ENCODE measurements at regions of chr1 and their contacts with region 1.

Region 1: GRCh38 chr1:31789259-31790065 is 25.3 kb upstream of the ADGRB2 start:
- DNase-seq: peak; percentile 87 to 92 (median 90)
- H3K4me3 ChIP-seq: peak overlapping the region in 1 of 2 donors; percentile 78
- H3K4me3 Mint-ChIP-seq: peak overlapping the region; percentile 89 to 96 (median 94)
- H3K27ac ChIP-seq: peak overlapping the region; percentile 71
- H3K27ac Mint-ChIP-seq: peak overlapping the region in 6 of 7 donors; percentile 59 to 99 (median 92)
- H3K4me1 ChIP-seq: peaks cover 9% of the 10 kb centered on the region
- H3K4me1 Mint-ChIP-seq: peaks cover 5 to 19% (median 10%) of the 10 kb centered on the region in 4 donors
- H3K27me3 ChIP-seq: no peaks in the 10 kb centered on the region
- H3K27me3 Mint-ChIP-seq: no peaks in the 10 kb centered on the region

Region 2: DNA sequence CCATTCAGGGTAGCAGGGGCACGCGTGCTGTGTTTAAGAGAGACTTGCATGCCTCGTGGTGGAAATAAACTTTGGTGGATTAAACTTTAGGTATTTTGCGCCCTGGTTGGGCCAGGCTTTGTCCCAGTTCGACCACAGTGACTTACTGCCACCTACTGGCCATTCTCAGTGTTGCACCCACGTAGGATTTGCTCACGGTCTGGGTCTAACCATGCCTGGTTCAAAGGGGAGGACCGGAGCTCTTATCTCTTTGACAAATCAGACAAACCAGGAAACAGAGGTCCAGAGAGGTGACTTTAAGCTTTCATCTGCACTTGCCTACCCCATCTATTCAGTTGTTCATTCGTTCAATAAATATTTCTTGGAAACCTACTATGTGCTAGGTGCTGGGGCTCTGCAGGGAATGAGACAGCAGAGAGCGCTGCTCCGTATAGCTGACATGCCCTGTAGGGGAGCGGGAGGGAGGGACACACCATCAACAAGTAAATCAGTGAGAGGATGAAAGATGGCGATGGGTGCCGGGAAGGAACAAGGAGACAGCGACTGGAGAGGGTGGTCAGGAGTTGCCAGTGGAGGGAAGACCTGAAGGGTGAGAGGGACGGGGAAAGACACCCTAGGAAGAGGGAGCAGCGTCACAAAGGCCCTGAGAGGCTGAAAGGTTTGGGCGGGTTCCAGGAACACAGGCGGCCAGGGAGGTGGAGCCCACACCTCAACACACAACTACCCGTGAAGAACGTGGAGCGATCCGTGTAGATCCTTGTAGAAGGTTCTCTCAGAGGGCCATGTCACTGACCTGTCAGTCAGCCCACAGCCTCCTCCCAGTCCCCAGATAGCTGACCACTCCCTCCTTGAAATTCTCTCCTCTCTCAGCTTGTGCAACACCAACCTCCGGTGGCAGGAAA is 240.3 kb before region 1 on chr1:
- CTCF ChIA-PET with region 1: interaction called, 15 read pairs
- POLR2A ChIA-PET with region 1: no interaction called
- intact Hi-C with region 1: loop called (anchors 5 kb)
- DNase-seq: peak; percentile 79 to 86 (median 84)
- H3K4me3 ChIP-seq: no peak overlapping the region
- H3K4me3 Mint-ChIP-seq: peak overlapping the region; percentile 37 to 75 (median 54)
- H3K27ac ChIP-seq: no peak overlapping the region
- H3K27ac Mint-ChIP-seq: no peak overlapping the region
- H3K4me1 ChIP-seq: peaks cover 11% of the 10 kb centered on the region
- H3K4me1 Mint-ChIP-seq: peaks cover 6 to 9% (median 8%) of the 10 kb centered on the region in 4 donors
- H3K27me3 ChIP-seq: no peaks in the 10 kb centered on the region
- H3K27me3 Mint-ChIP-seq: peaks cover 2 to 4% of the 10 kb centered on the region in 2 donors

Region 3: GRCh38 chr1:31644560-31645273 is 144.7 kb before region 1 on chr1 and contains the start of gene PEF1:
- CTCF ChIA-PET with region 1: interaction called, 13 read pairs
- POLR2A ChIA-PET with region 1: interaction called, 14 read pairs
- intact Hi-C with region 1: loop called (anchors 1 kb)
- DNase-seq: peak; percentile 99 to 100 (median 99)
- H3K4me3 ChIP-seq: peak within 1 kb of the TSS; percentile 72 to 74
- H3K4me3 Mint-ChIP-seq: peak within 1 kb of the TSS; percentile 97 to 100 (median 100)
- H3K27ac ChIP-seq: peak within 1 kb of the TSS; percentile 99
- H3K27ac Mint-ChIP-seq: peak within 1 kb of the TSS; percentile 98 to 100 (median 100)
- H3K4me1 ChIP-seq: peaks cover 41% of the 10 kb centered on the region
- H3K4me1 Mint-ChIP-seq: peaks cover 23 to 43% (median 32%) of the 10 kb centered on the region in 4 donors
- H3K27me3 ChIP-seq: no peaks in the 10 kb centered on the region
- H3K27me3 Mint-ChIP-seq: no peaks in the 10 kb centered on the region
- total RNA-seq, gene PEF1: 39.1 to 41.7 TPM

Region 4: DNA sequence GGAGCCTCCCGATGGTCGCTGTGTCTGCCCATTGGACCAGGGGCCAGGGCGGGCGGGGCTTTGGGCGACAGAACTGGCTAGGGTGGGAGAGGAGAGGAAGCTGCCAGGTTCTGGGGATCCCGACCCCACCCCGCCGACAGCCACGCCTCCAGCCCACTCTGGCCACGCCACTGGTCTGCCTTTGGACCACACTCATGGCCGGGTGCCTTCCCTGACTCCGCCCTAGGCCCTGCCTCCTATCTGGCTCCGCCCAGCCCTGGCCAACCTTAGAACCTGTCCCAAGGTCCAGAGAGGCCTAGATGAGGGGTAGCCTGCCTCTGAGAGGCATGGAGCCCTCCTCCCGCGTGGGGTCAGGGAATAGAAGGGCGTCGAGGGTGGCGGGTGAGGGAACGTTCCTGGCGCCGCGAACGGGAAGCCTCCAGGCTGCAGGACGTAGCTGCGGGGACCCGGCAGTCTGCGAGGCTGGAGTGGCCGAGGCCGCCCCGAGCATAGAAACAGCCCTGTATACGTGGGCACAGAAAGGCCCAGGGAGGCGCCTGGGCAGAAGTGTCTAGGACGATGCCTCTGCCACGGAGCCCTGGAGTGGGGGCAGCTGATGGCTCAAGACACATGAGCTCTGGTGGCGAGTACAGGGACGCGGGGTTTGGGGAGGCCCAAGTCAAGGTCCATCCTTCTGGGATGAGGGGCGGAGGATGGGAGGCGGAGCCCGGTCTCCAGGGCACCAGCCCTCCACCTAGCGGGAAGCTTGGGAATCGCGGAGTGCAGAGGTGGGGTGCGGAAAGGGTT is 74.2 kb before region 1 on chr1:
- CTCF ChIA-PET with region 1: interaction called, 14 read pairs
- POLR2A ChIA-PET with region 1: no interaction called
- intact Hi-C with region 1: loop called (anchors 1 kb)
- DNase-seq: peak in 1 of 5 donors; percentile 15
- H3K4me3 ChIP-seq: no peak overlapping the region
- H3K4me3 Mint-ChIP-seq: peak overlapping the region; percentile 44 to 83 (median 70)
- H3K27ac ChIP-seq: no peak overlapping the region
- H3K27ac Mint-ChIP-seq: no peak overlapping the region
- H3K4me1 ChIP-seq: peaks cover 18% of the 10 kb centered on the region
- H3K4me1 Mint-ChIP-seq: peaks cover 7 to 23% (median 15%) of the 10 kb centered on the region in 4 donors
- H3K27me3 ChIP-seq: no peaks in the 10 kb centered on the region
- H3K27me3 Mint-ChIP-seq: peaks cover 33 to 51% of the 10 kb centered on the region in 2 donors

Region 5: DNA sequence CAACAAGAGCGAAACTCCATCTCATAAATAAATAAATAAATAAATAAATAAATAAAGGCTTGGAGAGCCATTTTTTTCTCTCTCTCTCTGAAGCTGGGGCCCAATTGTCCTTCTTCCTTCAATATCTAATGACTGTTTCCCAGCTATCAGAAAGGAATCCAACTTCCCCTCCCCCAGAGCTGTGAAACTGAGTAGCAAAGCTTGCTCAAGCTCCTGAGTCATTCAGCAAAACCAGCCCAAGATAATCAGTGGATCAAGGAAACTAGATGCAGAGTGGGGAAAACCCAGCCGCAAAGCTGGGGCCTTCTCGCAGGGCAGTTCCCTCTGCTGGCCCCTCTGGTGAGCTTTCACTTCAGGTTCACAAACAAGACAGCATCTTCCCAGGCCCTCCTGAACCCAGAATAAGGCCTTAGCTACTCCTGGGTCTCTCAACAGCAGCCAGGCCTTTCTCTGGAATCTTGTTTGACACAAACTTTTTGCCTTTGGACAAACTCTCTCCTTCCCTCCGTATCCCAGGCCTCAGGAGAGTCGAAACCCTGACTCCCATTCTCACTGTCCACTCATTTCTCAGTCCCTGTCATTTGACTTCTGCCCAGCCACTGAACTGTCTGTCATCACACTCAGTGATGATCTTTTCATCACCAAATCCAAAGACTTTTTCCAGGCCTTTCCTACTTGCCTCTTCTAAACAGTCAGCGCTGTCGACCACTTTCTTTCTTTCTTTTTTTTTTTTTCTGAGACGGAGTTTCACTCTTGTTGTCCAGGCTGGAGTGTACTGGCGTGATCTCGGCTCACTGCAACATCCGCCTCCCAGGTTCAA is 166.7 kb after region 1 on chr1:
- CTCF ChIA-PET with region 1: interaction called, 12 read pairs
- POLR2A ChIA-PET with region 1: no interaction called
- intact Hi-C with region 1: no loop called
- DNase-seq: peak; percentile 72 to 93 (median 76)
- H3K4me3 ChIP-seq: no peak overlapping the region
- H3K4me3 Mint-ChIP-seq: peak overlapping the region in 7 of 8 donors; percentile 70 to 86 (median 78)
- H3K27ac ChIP-seq: peak overlapping the region; percentile 78
- H3K27ac Mint-ChIP-seq: peak overlapping the region; percentile 91 to 96 (median 93)
- H3K4me1 ChIP-seq: peaks cover 70% of the 10 kb centered on the region
- H3K4me1 Mint-ChIP-seq: peaks cover 49 to 85% (median 63%) of the 10 kb centered on the region in 4 donors
- H3K27me3 ChIP-seq: no peaks in the 10 kb centered on the region
- H3K27me3 Mint-ChIP-seq: no peaks in the 10 kb centered on the region